ENCODE measurements at regions of chr7 and their contacts with region 1.

Region 1: DNA sequence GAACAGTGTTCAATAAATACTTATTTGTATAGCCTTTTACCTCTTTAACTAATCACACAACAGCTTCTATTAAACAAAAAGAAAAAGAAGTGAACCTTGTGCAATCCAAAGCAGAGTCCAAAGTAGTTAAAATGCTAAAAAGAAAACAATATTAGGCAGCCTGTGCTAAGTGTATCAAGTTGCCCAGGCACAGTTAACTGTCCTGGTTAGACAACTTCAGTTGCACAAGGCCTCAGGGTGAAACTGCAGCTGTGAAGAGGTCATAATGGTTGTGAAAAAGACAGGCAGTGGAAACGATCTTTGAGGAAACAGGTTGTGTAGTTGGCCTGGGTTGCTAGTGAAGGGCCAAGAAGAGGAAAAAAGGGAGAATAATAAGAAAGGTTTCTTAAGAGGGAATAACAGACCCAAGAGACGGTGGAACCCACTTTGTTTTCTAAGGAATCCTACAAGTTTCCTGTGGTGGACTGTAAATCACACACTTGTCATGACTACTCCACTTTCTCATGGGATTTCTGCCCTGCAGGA is 6.0 kb upstream of the CROT start:
- DNase-seq: no peak
- ATAC-seq: no peak
- H3K4me3 ChIP-seq: no peak overlapping the region
- H3K4me3 Mint-ChIP-seq: no peak overlapping the region
- H3K27ac ChIP-seq: no peak overlapping the region
- H3K27ac Mint-ChIP-seq: no peak overlapping the region
- H3K4me1 ChIP-seq: peaks cover 6% of the 10 kb centered on the region
- H3K4me1 Mint-ChIP-seq: peaks cover 23% of the 10 kb centered on the region
- H3K27me3 ChIP-seq: no peaks in the 10 kb centered on the region
- H3K27me3 Mint-ChIP-seq: no peaks in the 10 kb centered on the region
- CTCF ChIP-seq: no peak

Region 2: GRCh38 chr7:87354749-87355148 is 15.3 kb after region 1 on chr7:
- CTCF ChIA-PET with region 1: no interaction called
- POLR2A ChIA-PET with region 1: no interaction called
- intact Hi-C with region 1: loop called in 1 of 2 experiments (anchors 2 kb)
- DNase-seq: no peak
- ATAC-seq: no peak
- H3K4me3 ChIP-seq: no peak overlapping the region
- H3K4me3 Mint-ChIP-seq: no peak overlapping the region
- H3K27ac ChIP-seq: no peak overlapping the region
- H3K27ac Mint-ChIP-seq: no peak overlapping the region
- H3K4me1 ChIP-seq: no peaks in the 10 kb centered on the region
- H3K4me1 Mint-ChIP-seq: no peaks in the 10 kb centered on the region
- H3K27me3 ChIP-seq: no peaks in the 10 kb centered on the region
- H3K27me3 Mint-ChIP-seq: no peaks in the 10 kb centered on the region
- CTCF ChIP-seq: no peak